OCI-LY7 (cell line): ENCODE measurements at regions of chr13 and their contacts with region 1.

Region 1: GRCh38 chr13:107205303-107206104 is 637.6 kb upstream of the ARGLU1 start:
- DNase-seq: peak; percentile 39
- H3K4me3 ChIP-seq: no peak overlapping the region
- H3K27ac ChIP-seq: no peak overlapping the region
- H3K4me1 ChIP-seq: no peaks in the 10 kb centered on the region
- CTCF ChIP-seq: peak; percentile 84

Region 2: GRCh38 chr13:106905380-106906162 is 299.9 kb before region 1 on chr13:
- CTCF ChIA-PET with region 1: no interaction called
- POLR2A ChIA-PET with region 1: no interaction called
- intact Hi-C with region 1: no loop called
- DNase-seq: no peak
- H3K4me3 ChIP-seq: no peak overlapping the region
- H3K27ac ChIP-seq: no peak overlapping the region
- H3K4me1 ChIP-seq: no peaks in the 10 kb centered on the region
- CTCF ChIP-seq: no peak

Region 3: GRCh38 chr13:107166258-107166657 is 39.2 kb before region 1 on chr13:
- CTCF ChIA-PET with region 1: no interaction called
- POLR2A ChIA-PET with region 1: no interaction called
- intact Hi-C with region 1: no loop called
- DNase-seq: no peak
- H3K4me3 ChIP-seq: no peak overlapping the region
- H3K27ac ChIP-seq: no peak overlapping the region
- H3K4me1 ChIP-seq: no peaks in the 10 kb centered on the region
- CTCF ChIP-seq: no peak

Region 4: DNA sequence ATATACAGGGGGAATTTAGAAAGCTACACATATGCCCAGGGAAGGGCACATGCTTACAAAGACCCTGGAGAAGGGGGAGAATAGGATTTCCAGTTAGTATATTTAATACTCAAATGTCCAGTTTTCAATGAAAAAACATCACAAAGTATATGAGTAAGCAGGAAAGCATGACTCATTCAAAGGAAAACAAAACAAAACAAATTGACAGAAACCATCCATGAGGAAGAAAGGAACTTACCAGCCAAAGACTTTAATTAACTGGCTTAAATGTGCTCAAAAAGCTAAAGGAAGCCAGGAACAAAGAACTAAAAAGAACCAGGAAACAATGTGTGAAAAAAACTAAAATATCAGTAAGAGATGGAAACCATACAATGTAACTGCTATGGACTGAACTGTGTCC is 78.7 kb after region 1 on chr13:
- CTCF ChIA-PET with region 1: no interaction called
- POLR2A ChIA-PET with region 1: no interaction called
- intact Hi-C with region 1: no loop called
- DNase-seq: no peak
- H3K4me3 ChIP-seq: no peak overlapping the region
- H3K27ac ChIP-seq: no peak overlapping the region
- H3K4me1 ChIP-seq: no peaks in the 10 kb centered on the region
- CTCF ChIP-seq: no peak

Region 5: GRCh38 chr13:107650081-107650701 is 444.7 kb after region 1 on chr13:
- CTCF ChIA-PET with region 1: no interaction called
- POLR2A ChIA-PET with region 1: no interaction called
- intact Hi-C with region 1: loop called (anchors 5 kb)
- DNase-seq: peak; percentile 37
- H3K4me3 ChIP-seq: no peak overlapping the region
- H3K27ac ChIP-seq: no peak overlapping the region
- H3K4me1 ChIP-seq: no peaks in the 10 kb centered on the region
- CTCF ChIP-seq: peak; percentile 76